RWPE1 (cell line): ENCODE measurements at regions of chr11 and their contacts with region 1.

Region 1: GRCh38 chr11:122756417-122756816 is 81.9 kb upstream of the CRTAM start:
- DNase-seq: no peak
- H3K27ac ChIP-seq: no peak overlapping the region
- CTCF ChIP-seq: no peak

Region 2: GRCh38 chr11:122634497-122634896 is 121.9 kb before region 1 on chr11:
- CTCF ChIA-PET with region 1: interaction called, 10 read pairs
- POLR2A ChIA-PET with region 1: no interaction called
- DNase-seq: no peak
- H3K27ac ChIP-seq: no peak overlapping the region
- CTCF ChIP-seq: no peak